PC-9 (cell line): ENCODE measurements at regions of chr9 and their contacts with region 1.

Region 1: GRCh38 chr9:133876144-133876543 is 116.0 kb downstream of the VAV2 start:
- DNase-seq: no peak
- H3K4me3 ChIP-seq: no peak overlapping the region
- H3K27ac ChIP-seq: no peak overlapping the region
- H3K4me1 ChIP-seq: peaks cover 55% of the 10 kb centered on the region
- H3K27me3 ChIP-seq: no peaks in the 10 kb centered on the region
- CTCF ChIP-seq: peak; percentile 50

Region 2: GRCh38 chr9:133792721-133793470 is 83.2 kb before region 1 on chr9:
- CTCF ChIA-PET with region 1: no interaction called
- POLR2A ChIA-PET with region 1: interaction called, 12 read pairs
- intact Hi-C with region 1: loop called (anchors 1 kb)
- DNase-seq: peak; percentile 36 to 74
- H3K4me3 ChIP-seq: no peak overlapping the region
- H3K27ac ChIP-seq: no peak overlapping the region
- H3K4me1 ChIP-seq: no peaks in the 10 kb centered on the region
- H3K27me3 ChIP-seq: no peaks in the 10 kb centered on the region
- CTCF ChIP-seq: peak; percentile 95

Region 3: DNA sequence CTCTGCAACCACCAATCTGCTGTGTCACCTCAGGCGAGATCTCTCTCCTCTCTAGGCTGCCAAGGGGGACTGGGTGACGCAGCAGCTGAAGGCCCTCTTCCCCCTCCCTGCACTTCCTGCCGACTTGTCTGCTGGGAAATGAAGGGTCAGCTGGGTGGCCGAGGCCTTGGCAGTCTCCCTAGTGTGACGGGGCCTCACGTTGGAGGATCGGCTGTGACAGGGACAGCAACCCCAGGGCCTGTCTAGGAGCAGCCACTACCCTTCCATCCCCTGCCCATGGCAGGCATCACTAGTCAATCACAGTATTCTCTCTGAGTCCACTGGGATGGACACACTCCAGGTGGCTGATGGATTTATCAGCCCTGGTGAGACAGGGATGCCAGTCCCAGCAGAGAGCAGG is 30.7 kb before region 1 on chr9:
- CTCF ChIA-PET with region 1: no interaction called
- POLR2A ChIA-PET with region 1: no interaction called
- intact Hi-C with region 1: no loop called
- DNase-seq: no peak
- H3K4me3 ChIP-seq: no peak overlapping the region
- H3K27ac ChIP-seq: no peak overlapping the region
- H3K4me1 ChIP-seq: no peaks in the 10 kb centered on the region
- H3K27me3 ChIP-seq: no peaks in the 10 kb centered on the region
- CTCF ChIP-seq: no peak

Region 4: GRCh38 chr9:133967014-133967741 is 91.0 kb after region 1 on chr9:
- CTCF ChIA-PET with region 1: interaction called, 3 read pairs
- POLR2A ChIA-PET with region 1: no interaction called
- intact Hi-C with region 1: loop called (anchors 2 kb)
- DNase-seq: peak; percentile 45 to 79
- H3K4me3 ChIP-seq: no peak overlapping the region
- H3K27ac ChIP-seq: no peak overlapping the region
- H3K4me1 ChIP-seq: peaks cover 18% of the 10 kb centered on the region
- H3K27me3 ChIP-seq: no peaks in the 10 kb centered on the region
- CTCF ChIP-seq: no peak